Left cardiac atrium (tissue), 4 donors: ENCODE measurements at regions of chr9 and their contacts with region 1.

Region 1: GRCh38 chr9:69421908-69422801 is 97.1 kb downstream of the ENTREP1 start:
- DNase-seq: peak; percentile 42
- ATAC-seq: peak; percentile 83 to 85

Region 2: GRCh38 chr9:69513141-69513820 is 91.1 kb after region 1 on chr9:
- intact Hi-C with region 1: no loop called
- DNase-seq: no peak
- ATAC-seq: no peak

Region 3: GRCh38 chr9:69549310-69550202 is 127.4 kb after region 1 on chr9:
- intact Hi-C with region 1: loop called (anchors 2 to 5 kb)
- DNase-seq: peak; percentile 35
- ATAC-seq: peak; percentile 65 to 70

Region 4: GRCh38 chr9:69759421-69760277 is 337.5 kb after region 1 on chr9 and contains the start of gene PTAR1:
- intact Hi-C with region 1: no loop called
- DNase-seq: peak; percentile 94
- ATAC-seq: peak; percentile 98
- total RNA-seq, gene PTAR1: 31.1 to 34.5 TPM

Region 5: DNA sequence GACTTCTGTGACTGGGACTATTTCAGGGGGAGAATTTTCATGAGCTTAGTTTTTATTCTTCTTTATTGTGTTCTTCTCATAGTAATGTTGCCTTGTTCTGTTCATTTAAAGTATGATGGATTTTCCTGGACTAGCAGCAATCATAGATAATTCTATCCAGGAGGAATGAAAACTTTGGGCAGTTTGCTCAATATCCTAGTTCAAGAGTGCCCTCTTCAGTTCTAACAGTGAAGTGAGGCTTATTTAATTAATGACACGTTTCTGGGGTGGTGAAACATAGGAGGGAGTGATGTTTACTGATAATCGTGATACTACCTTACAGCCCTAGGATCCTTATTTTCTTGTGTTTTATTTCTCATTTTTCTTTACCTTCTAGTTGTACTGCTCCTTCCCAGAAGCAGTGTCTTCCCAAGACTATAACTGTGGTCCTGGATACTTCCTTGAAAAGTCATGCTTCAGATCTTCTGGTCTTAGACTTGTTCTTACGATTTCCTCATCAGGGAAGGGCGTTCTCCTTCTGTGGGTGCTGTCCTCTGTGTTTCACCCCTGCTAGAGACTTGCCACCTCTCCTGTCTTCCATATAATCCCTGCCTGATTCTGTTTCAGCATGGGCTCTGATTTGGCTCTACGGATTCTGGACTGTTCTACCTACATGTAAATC is 455.8 kb after region 1 on chr9:
- intact Hi-C with region 1: loop called in 1 of 2 experiments (anchors 2 kb)
- DNase-seq: no peak
- ATAC-seq: peak; percentile 65 to 72

Region 6: DNA sequence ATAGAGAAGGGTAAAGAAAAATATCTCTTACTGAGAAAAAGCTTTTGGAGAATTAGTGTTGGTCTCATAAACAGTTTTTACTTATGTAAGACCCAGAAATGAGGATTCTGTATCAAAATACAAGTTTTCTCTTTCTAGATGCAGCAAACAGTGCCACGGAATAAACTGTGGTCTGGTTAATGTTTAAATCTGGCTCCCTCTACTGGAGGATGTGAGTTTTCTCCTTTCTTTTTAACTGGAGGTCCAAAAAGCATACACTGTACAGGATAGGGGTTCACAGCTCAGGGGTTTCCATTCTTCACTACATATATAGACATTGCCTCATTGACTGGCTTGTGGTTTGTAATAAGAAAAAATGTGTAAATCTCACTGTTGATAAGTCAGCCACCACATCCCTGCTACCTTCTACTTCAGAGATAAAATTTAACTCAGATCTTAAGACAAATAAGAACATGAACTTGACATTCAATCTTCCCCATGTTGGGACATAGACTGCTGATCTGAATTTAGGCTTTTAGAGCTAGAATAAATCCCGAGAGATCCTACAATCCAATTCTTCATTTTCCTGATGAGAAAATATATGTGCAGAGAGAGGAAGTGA is 497.4 kb after region 1 on chr9:
- intact Hi-C with region 1: loop called (anchors 10 kb)
- DNase-seq: no peak
- ATAC-seq: peak; percentile 84 to 86

Region 7: DNA sequence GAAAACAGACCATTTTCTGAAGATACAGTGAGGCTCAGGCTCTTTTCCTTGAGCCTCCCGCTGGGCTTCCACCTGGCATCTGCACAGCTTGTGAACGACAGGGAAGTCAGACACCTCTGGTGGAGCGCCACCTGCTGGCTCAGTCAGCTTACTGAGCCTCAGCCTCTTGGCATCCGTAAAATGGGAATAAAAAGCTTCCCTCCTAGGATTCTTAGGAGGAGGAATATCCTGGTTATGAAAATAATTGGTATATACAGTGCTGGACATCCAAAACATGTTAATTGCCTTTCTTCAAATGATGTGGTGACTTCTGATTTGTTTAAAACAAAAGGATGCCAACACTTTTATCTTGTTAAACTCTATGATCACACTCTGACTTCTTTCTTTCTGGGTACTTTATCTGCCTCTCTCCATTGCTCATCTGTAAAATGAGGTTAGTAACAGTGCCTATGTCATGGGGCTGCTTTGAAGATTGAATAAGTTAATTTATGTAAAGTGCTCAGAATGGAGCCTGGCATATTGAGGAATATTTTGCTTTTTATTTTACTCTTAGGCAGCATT is 689.0 kb after region 1 on chr9:
- intact Hi-C with region 1: loop called in 1 of 2 experiments (anchors 10 kb)
- DNase-seq: peak; percentile 90
- ATAC-seq: peak; percentile 58 to 84